Ascending aorta (tissue), 2 donors: ENCODE measurements at regions of chr7 and their contacts with region 1.

Region 1: DNA sequence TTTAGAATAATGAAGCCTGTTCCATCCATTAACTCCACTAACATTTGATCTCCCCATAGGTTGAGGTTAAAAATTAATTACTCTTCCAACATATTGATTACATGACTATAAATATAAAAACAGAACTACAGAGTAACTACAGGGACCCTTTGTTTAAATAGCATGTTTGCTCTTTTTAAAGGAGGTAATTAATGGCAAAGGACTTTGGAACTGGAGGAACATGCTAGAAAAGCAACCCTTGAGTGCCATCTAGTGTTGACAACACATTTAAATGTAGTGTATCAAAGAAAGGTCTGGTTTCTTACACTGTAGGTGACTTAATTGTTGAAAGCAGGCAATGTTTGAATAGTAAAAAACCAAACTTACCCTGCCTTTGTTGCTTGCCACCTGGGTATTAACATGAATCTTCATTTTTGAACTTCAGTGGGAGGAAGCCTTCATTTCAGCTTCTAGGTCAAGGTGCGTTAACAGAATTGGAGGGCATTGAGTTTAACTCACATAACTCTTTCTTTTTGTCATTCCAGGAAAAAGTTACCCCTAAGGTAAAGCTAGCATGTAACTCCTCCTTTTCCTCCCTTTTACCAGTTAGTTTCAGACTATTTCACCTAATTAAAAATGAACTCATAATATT is 52.6 kb upstream of the CAPZA2 start:
- DNase-seq: no peak
- H3K4me3 ChIP-seq: no peak overlapping the region
- H3K27ac ChIP-seq: peak overlapping the region in 1 of 2 donors; percentile 3
- H3K4me1 ChIP-seq: peaks cover 0 to 5% of the 10 kb centered on the region in 2 donors
- H3K27me3 ChIP-seq: no peaks in the 10 kb centered on the region
- CTCF ChIP-seq: peak; percentile 65 to 77 (median 65)

Region 2: DNA sequence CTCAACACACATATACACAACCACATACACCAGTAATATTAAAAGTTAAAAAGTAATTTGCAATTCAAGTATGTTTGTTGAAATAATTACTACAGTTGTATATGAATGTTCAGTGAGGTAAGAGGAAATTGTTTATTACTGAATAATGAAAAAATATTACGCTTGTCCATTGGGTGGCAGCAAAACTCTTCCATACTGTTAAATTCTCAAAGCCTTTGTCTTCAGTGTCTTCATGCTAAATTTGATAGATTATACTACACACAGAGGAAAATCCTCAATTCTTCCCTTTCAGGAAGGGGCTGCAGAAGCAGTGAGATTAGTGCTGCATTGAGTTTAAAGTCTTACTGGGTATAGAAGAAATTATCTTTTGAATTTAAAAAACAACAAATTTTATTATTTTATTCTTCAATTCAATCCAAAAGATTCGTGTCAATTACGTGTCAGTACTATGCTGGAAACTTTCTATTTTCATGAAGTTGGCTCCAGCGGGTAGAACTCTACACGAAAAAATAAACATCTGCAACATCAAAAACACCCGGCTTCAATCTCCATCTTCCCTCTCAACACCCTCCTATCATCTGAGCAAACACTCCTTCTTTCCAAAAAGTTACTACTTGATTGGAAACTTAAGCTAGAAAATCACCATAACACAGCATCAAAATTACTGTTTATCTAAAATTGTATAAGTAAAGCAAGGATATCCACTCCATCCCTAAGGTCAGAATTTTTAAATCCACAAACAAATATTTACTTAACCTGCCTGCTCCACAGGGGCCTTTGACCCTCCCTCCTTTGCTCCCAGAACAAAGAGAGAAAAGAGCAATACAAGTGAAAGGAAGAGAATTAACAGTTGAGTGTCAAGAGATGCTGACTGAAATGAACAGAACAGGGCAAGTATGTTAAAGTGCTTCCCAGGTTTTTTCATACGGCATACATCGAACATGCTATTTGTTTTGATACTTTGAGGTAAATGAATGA is 636.4 kb before region 1 on chr7:
- intact Hi-C with region 1: loop called (anchors 2 kb)
- DNase-seq: no peak
- H3K4me3 ChIP-seq: no peak overlapping the region
- H3K27ac ChIP-seq: no peak overlapping the region
- H3K4me1 ChIP-seq: peaks cover 0 to 4% of the 10 kb centered on the region in 2 donors
- H3K27me3 ChIP-seq: no peaks in the 10 kb centered on the region
- CTCF ChIP-seq: peak; percentile 26 to 59 (median 56)

Region 3: GRCh38 chr7:116258734-116259133 is 551.0 kb before region 1 on chr7:
- intact Hi-C with region 1: loop called (anchors 5 kb)
- DNase-seq: no peak
- H3K4me3 ChIP-seq: no peak overlapping the region
- H3K27ac ChIP-seq: peak overlapping the region; percentile 0 to 46
- H3K4me1 ChIP-seq: peaks cover 0 to 6% of the 10 kb centered on the region in 2 donors
- H3K27me3 ChIP-seq: no peaks in the 10 kb centered on the region
- CTCF ChIP-seq: peak; percentile 64 to 77 (median 75)

Region 4: DNA sequence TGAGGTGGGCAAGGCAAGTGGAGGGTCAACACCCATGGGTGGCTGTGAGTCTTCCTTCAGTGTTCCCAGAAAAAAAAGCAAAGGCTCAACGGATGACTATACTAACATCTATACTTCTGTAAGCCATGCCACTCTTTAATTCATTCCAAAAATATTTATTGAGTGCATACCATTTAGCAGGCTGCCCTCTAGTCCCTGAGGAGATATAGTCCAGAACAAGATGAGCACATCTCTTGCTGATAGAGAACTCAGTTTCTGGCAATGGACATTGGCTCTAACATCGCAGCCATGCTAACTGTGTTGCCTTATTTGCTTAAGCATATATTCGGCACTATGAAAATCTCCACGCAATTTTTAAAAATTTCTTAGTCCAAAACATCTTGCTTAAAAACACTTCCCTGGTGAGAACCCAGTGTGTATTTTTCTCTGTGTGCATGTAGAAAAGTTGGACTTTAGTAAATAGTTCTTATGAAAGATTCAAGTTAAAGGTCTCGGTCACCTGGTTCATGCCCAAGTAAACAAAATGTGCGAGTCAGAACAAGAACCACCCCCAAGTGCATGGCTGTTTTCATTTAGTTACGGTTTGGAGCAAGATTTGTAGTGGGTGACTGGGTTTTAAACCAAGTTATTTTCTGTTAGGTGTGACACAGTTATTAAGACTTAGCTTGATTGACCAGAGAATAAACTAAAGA is 68.0 kb before region 1 on chr7:
- intact Hi-C with region 1: no loop called
- DNase-seq: no peak
- H3K4me3 ChIP-seq: no peak overlapping the region
- H3K27ac ChIP-seq: no peak overlapping the region
- H3K4me1 ChIP-seq: no peaks in the 10 kb centered on the region
- H3K27me3 ChIP-seq: no peaks in the 10 kb centered on the region
- CTCF ChIP-seq: no peak